Transverse colon (tissue), 4 donors: ENCODE measurements at regions of chr10 and their contacts with region 1.

Region 1: GRCh38 chr10:72625608-72626443 is at the start of gene MICU1:
- DNase-seq: peak; percentile 97
- H3K4me3 ChIP-seq: peak within 1 kb of the TSS; percentile 73 to 98 (median 86)
- H3K27ac ChIP-seq: peak within 1 kb of the TSS; percentile 88 to 90 (median 89)
- H3K4me1 ChIP-seq: peaks cover 5 to 20% (median 12%) of the 10 kb centered on the region in 4 donors
- H3K27me3 ChIP-seq: no peaks in the 10 kb centered on the region
- CTCF ChIP-seq: no peak
- EP300 ChIP-seq: no peak
- POLR2A ChIP-seq: peak; percentile 85
- total RNA-seq, gene MICU1: 25.1 to 41.1 (median 34.9) TPM

Region 2: GRCh38 chr10:72692057-72692910 is 66.5 kb after region 1 on chr10 and contains the start of gene MCU:
- in situ Hi-C with region 1: no loop called
- intact Hi-C with region 1: loop called (anchors 10 kb)
- DNase-seq: peak; percentile 96
- H3K4me3 ChIP-seq: peak within 1 kb of the TSS; percentile 36 to 85 (median 68)
- H3K27ac ChIP-seq: peak within 1 kb of the TSS; percentile 88 to 96 (median 94)
- H3K4me1 ChIP-seq: peaks cover 14 to 34% (median 31%) of the 10 kb centered on the region in 4 donors
- H3K27me3 ChIP-seq: no peaks in the 10 kb centered on the region
- CTCF ChIP-seq: peak in 2 of 5 experiments; percentile 32 to 34
- EP300 ChIP-seq: no peak
- POLR2A ChIP-seq: peak; percentile 72
- total RNA-seq, gene MCU: 25.1 to 82.4 (median 65.1) TPM